ENCODE measurements at regions of chr9 and their contacts with region 1.

Region 1: DNA sequence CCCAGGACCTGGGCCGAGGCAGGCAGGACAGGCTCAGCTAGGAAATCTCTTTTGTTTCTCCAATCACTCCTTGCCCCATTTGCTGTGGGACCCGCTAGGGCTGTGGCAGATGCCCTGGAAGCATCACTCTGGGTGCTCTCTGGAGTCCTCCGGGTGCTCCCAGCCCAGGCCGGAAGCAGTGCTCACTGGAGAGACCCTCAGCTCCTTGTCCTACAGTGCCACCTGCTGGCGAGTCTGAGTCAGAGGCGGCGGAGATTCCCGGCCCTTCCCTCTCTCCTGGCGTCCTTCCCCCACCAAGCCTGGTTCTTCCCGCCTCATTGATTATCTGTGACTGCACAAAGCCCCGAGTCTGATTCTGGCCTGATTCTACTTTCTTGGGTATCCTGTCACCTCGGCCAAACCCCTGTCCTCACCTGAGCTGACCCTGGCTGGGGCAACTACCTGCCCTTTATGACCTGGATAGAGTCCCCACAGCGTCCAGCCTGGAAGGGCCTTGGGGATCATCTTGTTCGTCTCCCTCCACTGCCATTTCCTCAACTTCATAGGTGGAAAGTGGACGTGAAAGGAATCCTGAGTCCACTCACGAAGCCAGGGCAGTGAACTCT is 7.3 kb upstream of the BARHL1 start:
- ATAC-seq: peak; percentile 92 to 99 (median 96)
- H3K4me3 ChIP-seq: no peak overlapping the region
- H3K27ac ChIP-seq: no peak overlapping the region
- H3K4me1 ChIP-seq: peaks cover 9 to 10% of the 10 kb centered on the region in 2 donors

Region 2: GRCh38 chr9:132260846-132261245 is 314.3 kb before region 1 on chr9:
- in situ Hi-C with region 1: no loop called
- ATAC-seq: no peak
- H3K4me3 ChIP-seq: no peak overlapping the region
- H3K27ac ChIP-seq: no peak overlapping the region
- H3K4me1 ChIP-seq: no peaks in the 10 kb centered on the region

Region 3: DNA sequence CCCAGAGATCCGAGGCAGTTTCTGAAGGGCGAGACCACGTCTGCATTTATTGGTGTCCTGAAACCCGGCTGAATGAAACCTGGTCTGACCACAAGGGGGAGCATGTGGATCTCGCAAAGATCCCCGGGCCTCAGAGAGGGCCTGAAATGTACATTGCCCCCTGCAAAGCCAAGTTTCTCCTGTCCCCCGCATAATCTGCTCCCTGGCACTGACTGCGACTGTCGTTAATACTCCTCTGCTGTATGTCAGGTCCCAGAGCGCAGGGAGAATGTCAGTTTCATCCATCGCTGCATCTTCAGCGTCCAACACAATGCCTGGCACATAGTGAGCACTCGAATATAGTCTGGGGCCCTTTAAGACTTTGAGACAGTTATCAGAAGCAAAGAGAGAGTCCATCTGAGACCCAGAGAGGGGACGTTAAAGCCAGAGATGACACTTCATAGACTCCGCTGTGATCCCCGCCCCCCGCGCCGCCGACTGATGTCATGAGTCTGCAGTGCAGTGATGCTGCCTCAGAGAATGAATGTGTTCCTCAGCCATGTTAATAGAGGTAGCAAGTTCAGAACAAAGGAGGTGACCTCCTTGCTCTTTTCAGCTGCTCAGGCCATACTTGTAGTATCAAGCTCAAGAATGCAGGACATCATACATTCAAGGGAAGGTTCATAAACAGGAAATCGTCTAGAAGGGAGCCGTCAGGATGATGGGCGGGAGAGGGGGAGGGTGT is 67.2 kb before region 1 on chr9:
- in situ Hi-C with region 1: loop called in 2 of 9 experiments (anchors 10 kb)
- ATAC-seq: peak; percentile 38 to 92 (median 54)
- H3K4me3 ChIP-seq: no peak overlapping the region
- H3K27ac ChIP-seq: no peak overlapping the region
- H3K4me1 ChIP-seq: peaks cover 23 to 50% of the 10 kb centered on the region in 2 donors

Measured in motor neuron (in vitro differentiated cells).